CD4-positive, alpha-beta memory T cell (primary cell): ENCODE measurements at regions of chr10 and their contacts with region 1.

Region 1: GRCh38 chr10:104337974-104338735 is at the start of gene ITPRIP:
- DNase-seq: peak; percentile 81 to 88 (median 85)
- H3K4me3 ChIP-seq: peak within 1 kb of the TSS; percentile 51 to 80
- H3K4me3 Mint-ChIP-seq: peak within 1 kb of the TSS; percentile 96 to 100 (median 99)
- H3K27ac ChIP-seq: peak within 1 kb of the TSS; percentile 83
- H3K27ac Mint-ChIP-seq: peak within 1 kb of the TSS; percentile 97 to 100 (median 99)
- H3K4me1 ChIP-seq: peaks cover 48% of the 10 kb centered on the region
- H3K4me1 Mint-ChIP-seq: peaks cover 28 to 62% (median 42%) of the 10 kb centered on the region in 4 donors
- H3K27me3 ChIP-seq: no peaks in the 10 kb centered on the region
- H3K27me3 Mint-ChIP-seq: peaks cover 0 to 3% of the 10 kb centered on the region in 2 donors
- total RNA-seq, gene ITPRIP: 15.6 to 15.7 TPM

Region 2: DNA sequence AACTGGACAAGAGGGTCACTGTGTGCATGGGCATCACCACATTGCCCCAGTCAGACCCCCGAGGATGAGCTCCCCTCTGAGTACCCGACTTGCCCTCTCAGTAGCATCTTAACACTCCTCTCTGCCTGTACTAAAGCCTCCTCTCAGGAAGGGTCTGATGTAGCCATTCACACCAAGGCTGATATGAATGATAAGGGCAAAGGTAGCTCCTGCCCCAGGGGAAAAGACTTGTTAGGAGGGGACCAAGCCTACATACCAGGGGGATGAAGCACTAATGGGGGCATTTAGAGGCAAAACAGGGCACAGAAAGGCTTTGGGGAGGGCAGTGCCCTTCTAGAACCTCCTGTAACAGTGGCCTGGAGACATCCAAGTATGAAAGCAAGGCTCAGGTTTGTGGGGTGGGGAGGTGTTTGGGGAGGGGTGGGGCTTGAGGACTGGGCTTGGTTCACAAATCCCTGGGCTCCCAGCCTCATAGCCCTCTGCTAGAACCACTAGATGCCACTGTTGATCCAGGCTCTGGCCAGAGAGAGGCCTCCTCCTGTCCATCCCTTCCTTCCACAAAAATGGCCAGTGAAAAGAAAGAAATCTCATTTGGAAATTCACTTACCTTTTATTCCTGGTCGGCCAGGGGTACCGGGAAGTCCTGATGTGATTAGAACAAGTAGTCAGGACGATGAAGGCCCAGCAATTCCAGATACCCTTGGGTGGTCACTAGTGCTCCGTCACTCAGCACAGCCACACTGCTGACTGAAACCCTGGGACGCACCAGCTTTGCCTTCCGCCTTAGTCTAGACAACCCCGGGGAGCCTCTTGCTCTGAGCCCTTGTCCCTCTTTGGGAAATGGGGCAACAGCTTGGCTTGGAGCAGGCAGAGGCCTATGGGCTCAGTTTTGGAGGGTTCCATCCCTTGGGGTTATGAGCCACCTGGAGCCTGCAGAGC is 292.7 kb before region 1 on chr10:
- CTCF ChIA-PET with region 1: no interaction called
- POLR2A ChIA-PET with region 1: no interaction called
- intact Hi-C with region 1: no loop called
- DNase-seq: no peak
- H3K4me3 ChIP-seq: no peak overlapping the region
- H3K4me3 Mint-ChIP-seq: no peak overlapping the region
- H3K27ac ChIP-seq: no peak overlapping the region
- H3K27ac Mint-ChIP-seq: no peak overlapping the region
- H3K4me1 ChIP-seq: no peaks in the 10 kb centered on the region
- H3K4me1 Mint-ChIP-seq: no peaks in the 10 kb centered on the region
- H3K27me3 ChIP-seq: no peaks in the 10 kb centered on the region
- H3K27me3 Mint-ChIP-seq: no peaks in the 10 kb centered on the region

Region 3: DNA sequence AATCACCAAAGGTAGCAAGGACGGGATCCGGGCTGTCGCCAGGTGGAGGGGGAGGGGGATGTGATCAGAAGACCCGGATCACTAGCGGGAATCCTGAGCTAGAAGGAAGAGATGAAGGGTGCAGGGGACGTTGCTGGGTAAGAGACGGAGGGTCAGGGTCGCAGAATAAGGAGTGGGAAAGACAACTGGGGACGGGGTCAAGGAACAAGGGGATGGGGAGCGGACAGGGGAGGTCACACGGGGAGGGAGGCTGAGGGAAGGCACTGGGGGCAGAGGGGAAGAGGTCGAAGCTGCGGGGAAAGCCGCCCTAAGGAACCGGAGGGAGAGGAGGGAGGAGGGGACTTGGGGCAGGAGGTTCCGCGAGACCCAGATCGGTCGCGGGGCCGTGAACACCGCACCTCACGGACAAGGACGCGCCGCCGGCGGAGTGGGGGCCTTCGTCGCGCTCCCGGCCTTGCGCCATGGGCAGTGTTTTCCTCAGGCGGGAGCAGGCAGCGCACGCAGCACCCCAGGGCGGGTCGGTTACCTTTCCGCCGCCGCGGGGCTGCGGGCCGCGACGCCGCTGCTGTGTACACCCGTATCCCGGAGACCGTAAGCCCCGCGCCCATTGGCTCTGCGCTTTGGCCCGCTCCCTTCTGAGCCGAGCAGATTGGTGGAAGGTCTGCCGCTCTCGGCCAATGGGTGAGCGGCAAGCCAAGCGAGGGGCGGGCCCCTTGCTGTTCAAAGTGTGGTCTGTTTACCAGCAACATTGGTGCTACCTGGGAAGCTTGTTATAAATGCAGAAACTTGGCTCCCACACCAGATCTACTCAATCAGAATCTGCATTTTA is 106.2 kb before region 1 on chr10 and contains the start of gene CFAP43:
- CTCF ChIA-PET with region 1: no interaction called
- POLR2A ChIA-PET with region 1: no interaction called
- intact Hi-C with region 1: loop called (anchors 1 kb)
- DNase-seq: peak; percentile 99 to 100 (median 99)
- H3K4me3 ChIP-seq: peak within 1 kb of the TSS; percentile 57 to 64
- H3K4me3 Mint-ChIP-seq: peak within 1 kb of the TSS; percentile 84 to 94 (median 90)
- H3K27ac ChIP-seq: peak within 1 kb of the TSS; percentile 49
- H3K27ac Mint-ChIP-seq: peak within 1 kb of the TSS; percentile 82 to 96 (median 92)
- H3K4me1 ChIP-seq: peaks cover 6% of the 10 kb centered on the region
- H3K4me1 Mint-ChIP-seq: peaks cover 6 to 19% (median 11%) of the 10 kb centered on the region in 4 donors
- H3K27me3 ChIP-seq: peaks cover 5% of the 10 kb centered on the region
- H3K27me3 Mint-ChIP-seq: peaks cover 9 to 17% of the 10 kb centered on the region in 2 donors
- total RNA-seq, gene CFAP43: not detected

Region 4: DNA sequence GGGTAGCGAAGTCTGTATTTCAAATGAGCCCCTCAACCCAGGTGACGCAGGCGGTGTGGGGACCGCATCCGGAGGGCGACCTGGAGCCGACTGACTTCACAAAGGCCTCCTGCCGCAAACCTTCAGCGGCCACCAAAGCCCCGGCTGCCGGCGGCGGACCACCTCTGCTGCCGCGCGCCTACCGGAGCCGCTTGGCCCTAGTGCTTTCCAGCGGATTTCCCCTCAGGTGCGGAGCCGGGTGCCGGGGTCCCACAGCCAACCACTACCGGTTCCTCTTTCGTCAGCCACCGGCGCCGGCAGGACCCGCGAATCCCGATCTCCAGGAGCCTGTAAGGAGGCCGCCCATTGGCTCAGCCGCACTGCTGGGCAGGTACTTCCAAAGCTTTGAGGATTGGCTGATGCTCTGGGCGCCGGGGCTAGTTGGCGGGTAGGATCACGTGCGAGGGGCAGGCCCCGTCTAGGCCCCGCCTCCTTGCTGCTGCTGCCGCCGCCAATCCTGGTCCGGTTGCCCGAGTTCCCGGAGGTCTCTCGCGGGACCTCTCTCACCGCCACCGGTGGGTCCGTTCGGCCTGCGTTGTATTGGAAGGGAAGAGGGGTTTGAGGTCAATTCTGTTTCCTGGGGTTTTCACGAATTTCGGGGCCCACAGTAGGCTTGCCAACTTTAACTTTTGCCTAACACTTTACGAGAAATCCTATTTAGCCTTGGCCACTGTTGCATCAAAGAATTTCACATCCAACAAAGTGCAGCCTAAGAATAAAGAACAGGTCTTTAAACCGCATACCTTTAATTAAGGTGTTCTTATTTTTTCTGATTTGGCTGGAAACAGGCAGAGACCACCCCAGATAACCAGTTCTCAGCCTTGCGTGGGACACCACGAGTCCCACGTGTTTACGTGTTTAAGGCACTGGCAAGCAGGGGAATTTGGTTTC is 69.2 kb before region 1 on chr10 and contains the start of gene GSTO2:
- CTCF ChIA-PET with region 1: interaction called, 3 read pairs
- POLR2A ChIA-PET with region 1: interaction called, 13 read pairs
- intact Hi-C with region 1: loop called (anchors 2 kb)
- DNase-seq: peak; percentile 97 to 100 (median 99)
- H3K4me3 ChIP-seq: peak within 1 kb of the TSS; percentile 67 to 89
- H3K4me3 Mint-ChIP-seq: peak within 1 kb of the TSS; percentile 91 to 96 (median 92)
- H3K27ac ChIP-seq: peak within 1 kb of the TSS; percentile 90
- H3K27ac Mint-ChIP-seq: peak within 1 kb of the TSS; percentile 91 to 99 (median 96)
- H3K4me1 ChIP-seq: peaks cover 49% of the 10 kb centered on the region
- H3K4me1 Mint-ChIP-seq: peaks cover 28 to 56% (median 39%) of the 10 kb centered on the region in 4 donors
- H3K27me3 ChIP-seq: no peaks in the 10 kb centered on the region
- H3K27me3 Mint-ChIP-seq: no peaks in the 10 kb centered on the region
- total RNA-seq, gene GSTO2: 1.6 to 2.3 TPM

Region 5: DNA sequence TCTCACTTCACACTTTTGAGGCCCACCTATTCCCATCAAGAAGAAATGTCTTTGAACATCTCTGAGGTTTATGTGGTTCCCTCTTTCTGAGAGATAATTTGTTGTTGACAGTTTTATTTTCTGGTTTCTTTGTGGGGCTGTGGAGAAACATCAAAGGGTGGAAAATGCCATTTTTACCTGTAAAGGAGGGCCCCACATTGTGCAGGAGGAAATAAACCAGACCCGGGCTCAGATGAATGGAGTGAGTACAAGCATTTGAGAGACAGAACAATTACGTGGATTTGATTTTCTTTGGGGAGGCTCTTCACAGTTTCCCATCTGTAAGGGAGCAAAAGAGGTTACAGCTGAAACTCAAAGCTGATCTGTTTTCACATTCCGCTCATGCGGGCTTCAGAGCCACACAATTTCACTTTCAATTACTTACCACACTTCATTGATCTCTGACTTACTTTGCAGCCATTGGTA is 29.7 kb before region 1 on chr10:
- CTCF ChIA-PET with region 1: interaction called, 100 read pairs
- POLR2A ChIA-PET with region 1: interaction called, 126 read pairs
- intact Hi-C with region 1: loop called (anchors 1 kb)
- DNase-seq: peak; percentile 49 to 57 (median 51)
- H3K4me3 ChIP-seq: no peak overlapping the region
- H3K4me3 Mint-ChIP-seq: peak overlapping the region; percentile 8 to 84 (median 64)
- H3K27ac ChIP-seq: no peak overlapping the region
- H3K27ac Mint-ChIP-seq: peak overlapping the region; percentile 49 to 92 (median 82)
- H3K4me1 ChIP-seq: peaks cover 60% of the 10 kb centered on the region
- H3K4me1 Mint-ChIP-seq: peaks cover 42 to 82% (median 62%) of the 10 kb centered on the region in 4 donors
- H3K27me3 ChIP-seq: no peaks in the 10 kb centered on the region
- H3K27me3 Mint-ChIP-seq: no peaks in the 10 kb centered on the region

Region 6: DNA sequence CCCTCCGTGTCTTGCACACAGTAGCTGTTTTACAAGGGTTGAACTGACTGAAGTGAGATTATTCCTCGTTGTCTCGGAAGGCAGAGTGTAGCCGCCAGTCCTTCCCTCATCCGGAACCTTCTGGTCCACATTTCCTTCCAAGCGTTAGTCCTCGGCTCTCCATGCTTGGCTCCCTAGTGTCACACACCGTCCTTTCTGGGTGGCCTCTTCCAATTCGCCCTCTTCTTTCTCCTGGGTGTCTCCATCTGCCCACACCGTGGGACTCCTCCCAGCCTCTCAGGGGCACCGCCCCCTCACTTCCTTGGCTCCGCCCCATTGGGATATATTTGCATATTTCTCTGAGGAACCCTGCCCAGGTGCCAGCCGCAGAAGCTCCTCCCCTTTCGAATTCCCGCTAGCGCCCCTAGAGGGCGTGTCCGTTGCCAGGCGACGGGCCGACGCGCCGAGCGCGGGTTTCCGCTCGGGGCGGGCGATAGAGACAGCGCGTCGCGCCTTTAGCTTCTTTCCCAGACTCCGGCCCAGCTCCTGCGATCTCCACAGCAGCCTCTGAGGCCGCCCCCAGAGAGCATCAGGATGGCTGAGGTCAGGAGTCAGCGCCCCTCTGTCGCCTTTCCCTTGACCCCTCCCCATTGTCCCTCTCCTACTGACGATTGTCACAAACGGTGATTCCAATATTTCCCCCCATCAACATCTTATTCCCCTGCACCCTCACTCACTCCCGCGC is 15.3 kb after region 1 on chr10 and contains the start of gene CFAP58:
- CTCF ChIA-PET with region 1: interaction called, 36 read pairs
- POLR2A ChIA-PET with region 1: interaction called, 43 read pairs
- intact Hi-C with region 1: loop called (anchors 1 kb)
- DNase-seq: peak; percentile 87 to 91 (median 88)
- H3K4me3 ChIP-seq: peak within 1 kb of the TSS; percentile 17 to 58
- H3K4me3 Mint-ChIP-seq: peak within 1 kb of the TSS in 3 of 8 donors; percentile 41 to 72 (median 61)
- H3K27ac ChIP-seq: peak within 1 kb of the TSS; percentile 18
- H3K27ac Mint-ChIP-seq: peak within 1 kb of the TSS in 4 of 7 donors; percentile 34 to 66 (median 46)
- H3K4me1 ChIP-seq: peaks cover 33% of the 10 kb centered on the region
- H3K4me1 Mint-ChIP-seq: peaks cover 0 to 19% (median 14%) of the 10 kb centered on the region in 4 donors
- H3K27me3 ChIP-seq: no peaks in the 10 kb centered on the region
- H3K27me3 Mint-ChIP-seq: no peaks in the 10 kb centered on the region
- total RNA-seq, gene CFAP58: not detected